A673 (cell line): ENCODE measurements at regions of chr11 and their contacts with region 1.

Region 1: DNA sequence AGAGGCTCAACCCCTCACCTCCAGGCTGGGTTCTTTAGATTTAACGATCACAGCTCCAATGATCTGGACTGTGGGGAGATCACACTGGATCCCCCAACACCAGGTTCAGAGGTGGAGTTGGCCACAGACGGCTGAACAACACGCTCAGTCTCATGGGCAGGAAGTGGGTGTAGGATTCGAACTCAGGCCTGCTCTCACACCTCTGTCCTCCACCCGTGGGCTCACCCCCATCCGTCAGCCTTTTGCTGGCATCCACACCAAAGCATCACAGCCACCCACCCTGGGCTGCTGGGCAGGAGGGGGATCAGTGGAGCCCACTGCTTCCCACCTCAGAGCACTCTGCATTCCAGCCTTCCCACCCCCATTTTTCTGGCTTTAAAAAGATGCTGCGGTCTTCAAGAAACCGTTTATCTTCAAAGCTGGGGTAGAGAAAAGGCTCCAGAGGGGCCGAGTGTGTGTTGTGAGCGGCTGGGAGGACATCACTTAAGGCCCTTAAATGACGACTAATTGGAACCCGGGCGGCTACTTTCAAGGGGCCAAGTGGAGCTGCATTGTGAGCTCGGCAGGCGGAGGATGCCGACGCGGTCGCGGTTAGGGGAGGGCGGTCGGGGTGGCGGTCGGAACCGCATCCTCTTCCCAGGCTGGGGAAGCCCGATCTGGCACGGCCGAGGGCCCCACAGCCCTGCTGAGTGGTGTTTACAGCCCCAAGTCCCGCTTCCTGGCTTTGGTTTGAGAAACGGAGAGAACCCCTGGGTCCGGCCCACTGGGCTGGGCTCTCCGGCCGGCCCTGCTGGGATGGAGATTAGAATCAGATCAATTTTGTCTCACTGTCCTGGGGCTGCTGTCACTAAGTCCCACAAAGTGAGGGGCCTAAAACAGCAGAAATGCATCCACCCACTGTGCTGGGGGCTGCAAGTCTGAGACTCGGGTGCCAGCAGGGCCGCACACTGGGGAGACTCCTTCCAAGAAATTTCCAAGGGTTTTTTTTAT is 15.9 kb upstream of the FGF3 start:
- DNase-seq: no peak
- H3K4me3 ChIP-seq: no peak overlapping the region
- H3K27ac ChIP-seq: no peak overlapping the region
- H3K4me1 ChIP-seq: no peaks in the 10 kb centered on the region
- H3K27me3 ChIP-seq: no peaks in the 10 kb centered on the region
- CTCF ChIP-seq: no peak

Region 2: GRCh38 chr11:69848201-69848600 is 13.1 kb after region 1 on chr11:
- CTCF ChIA-PET with region 1: interaction called, 4 read pairs
- POLR2A ChIA-PET with region 1: interaction called, 12 read pairs
- intact Hi-C with region 1: no loop called
- DNase-seq: peak; percentile 46
- H3K4me3 ChIP-seq: no peak overlapping the region
- H3K27ac ChIP-seq: no peak overlapping the region
- H3K4me1 ChIP-seq: no peaks in the 10 kb centered on the region
- H3K27me3 ChIP-seq: peaks cover 27% of the 10 kb centered on the region
- CTCF ChIP-seq: no peak

Region 3: DNA sequence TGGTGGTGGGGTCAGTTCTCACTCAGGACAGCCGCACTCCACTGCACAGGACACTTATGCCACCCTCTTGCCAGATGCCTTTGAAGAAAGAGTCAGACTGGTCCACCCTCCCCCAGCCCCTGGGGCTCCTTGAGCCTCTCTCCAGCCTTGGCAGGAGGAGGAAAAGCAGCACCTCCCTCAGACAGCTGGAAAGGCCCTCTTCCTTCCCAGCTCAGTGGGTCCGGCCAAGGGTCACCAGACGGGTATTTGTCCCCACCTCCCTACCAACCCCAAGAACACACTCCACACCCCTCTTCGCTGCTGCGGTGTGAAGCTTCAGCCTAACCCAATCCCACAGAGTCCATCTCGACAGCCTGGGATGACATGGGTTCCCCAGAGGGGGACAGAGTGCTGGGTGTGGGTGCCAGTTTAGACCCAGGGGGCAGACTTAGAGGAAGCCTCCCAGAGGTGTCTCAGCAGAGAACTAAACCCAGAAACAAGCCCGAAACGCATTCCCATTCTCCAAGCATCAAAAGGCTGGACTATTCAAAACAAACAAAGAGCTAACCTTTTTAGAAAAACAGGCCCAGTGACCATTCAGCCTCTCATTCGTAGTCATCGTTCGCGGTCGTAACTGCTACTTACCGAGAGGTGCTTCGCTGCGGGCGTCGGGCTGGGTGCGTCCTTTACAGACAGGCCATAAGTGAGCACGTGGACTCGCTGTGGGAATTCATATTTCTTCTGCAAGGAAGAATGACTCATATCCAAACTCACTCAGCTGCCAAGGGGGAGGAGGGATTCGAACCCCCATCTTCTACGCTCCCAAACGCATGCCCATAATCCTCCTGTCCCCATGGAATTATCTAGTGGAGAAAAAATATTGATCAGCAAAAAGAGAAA is 185.5 kb after region 1 on chr11:
- CTCF ChIA-PET with region 1: no interaction called
- POLR2A ChIA-PET with region 1: no interaction called
- intact Hi-C with region 1: no loop called
- DNase-seq: no peak
- H3K4me3 ChIP-seq: no peak overlapping the region
- H3K27ac ChIP-seq: no peak overlapping the region
- H3K4me1 ChIP-seq: no peaks in the 10 kb centered on the region
- H3K27me3 ChIP-seq: no peaks in the 10 kb centered on the region
- CTCF ChIP-seq: no peak